CD4-positive, alpha-beta memory T cell (primary cell): ENCODE measurements at regions of chr3 and their contacts with region 1.

Region 1: GRCh38 chr3:170357176-170357919 is at the start of gene SKIL:
- DNase-seq: peak; percentile 96 to 98 (median 97)
- H3K4me3 ChIP-seq: peak within 1 kb of the TSS; percentile 57 to 62
- H3K4me3 Mint-ChIP-seq: peak within 1 kb of the TSS; percentile 90 to 99 (median 93)
- H3K27ac ChIP-seq: peak within 1 kb of the TSS; percentile 88
- H3K27ac Mint-ChIP-seq: peak within 1 kb of the TSS; percentile 95 to 99 (median 98)
- H3K4me1 ChIP-seq: peaks cover 32% of the 10 kb centered on the region
- H3K4me1 Mint-ChIP-seq: peaks cover 31 to 72% (median 43%) of the 10 kb centered on the region in 4 donors
- H3K27me3 ChIP-seq: no peaks in the 10 kb centered on the region
- H3K27me3 Mint-ChIP-seq: no peaks in the 10 kb centered on the region
- total RNA-seq, gene SKIL: 59.3 to 60.4 TPM

Region 2: GRCh38 chr3:169764452-169765274 is 592.7 kb before region 1 on chr3 and contains the start of gene TERC:
- CTCF ChIA-PET with region 1: interaction called, 8 read pairs
- POLR2A ChIA-PET with region 1: interaction called, 11 read pairs
- intact Hi-C with region 1: loop called (anchors 2 kb)
- DNase-seq: peak; percentile 93 to 96 (median 95)
- H3K4me3 ChIP-seq: peak within 1 kb of the TSS; percentile 36 to 70
- H3K4me3 Mint-ChIP-seq: peak within 1 kb of the TSS; percentile 94 to 98 (median 98)
- H3K27ac ChIP-seq: peak within 1 kb of the TSS; percentile 87
- H3K27ac Mint-ChIP-seq: peak within 1 kb of the TSS; percentile 95 to 99 (median 98)
- H3K4me1 ChIP-seq: peaks cover 23% of the 10 kb centered on the region
- H3K4me1 Mint-ChIP-seq: peaks cover 15 to 43% (median 23%) of the 10 kb centered on the region in 4 donors
- H3K27me3 ChIP-seq: no peaks in the 10 kb centered on the region
- H3K27me3 Mint-ChIP-seq: no peaks in the 10 kb centered on the region
- total RNA-seq, gene TERC: 15.6 to 15.7 TPM

Region 3: GRCh38 chr3:169772897-169773828 is 584.2 kb before region 1 on chr3 and contains the start of gene MYNN:
- CTCF ChIA-PET with region 1: no interaction called
- POLR2A ChIA-PET with region 1: interaction called, 31 read pairs
- intact Hi-C with region 1: loop called (anchors 2 kb)
- DNase-seq: peak; percentile 92 to 95 (median 94)
- H3K4me3 ChIP-seq: peak within 1 kb of the TSS; percentile 83 to 94
- H3K4me3 Mint-ChIP-seq: peak within 1 kb of the TSS; percentile 92 to 99 (median 98)
- H3K27ac ChIP-seq: peak within 1 kb of the TSS; percentile 99
- H3K27ac Mint-ChIP-seq: peak within 1 kb of the TSS; percentile 98 to 100 (median 99)
- H3K4me1 ChIP-seq: peaks cover 36% of the 10 kb centered on the region
- H3K4me1 Mint-ChIP-seq: peaks cover 27 to 70% (median 43%) of the 10 kb centered on the region in 4 donors
- H3K27me3 ChIP-seq: no peaks in the 10 kb centered on the region
- H3K27me3 Mint-ChIP-seq: peaks cover 0 to 11% of the 10 kb centered on the region in 2 donors
- total RNA-seq, gene MYNN: 21.1 to 23.0 TPM

Region 4: GRCh38 chr3:170221924-170222646 is 135.3 kb before region 1 on chr3 and contains the start of gene PRKCI:
- CTCF ChIA-PET with region 1: interaction called, 3 read pairs
- POLR2A ChIA-PET with region 1: interaction called, 28 read pairs
- intact Hi-C with region 1: loop called (anchors 1 kb)
- DNase-seq: peak; percentile 86 to 89 (median 88)
- H3K4me3 ChIP-seq: peak within 1 kb of the TSS; percentile 91 to 97
- H3K4me3 Mint-ChIP-seq: peak within 1 kb of the TSS; percentile 91 to 99 (median 94)
- H3K27ac ChIP-seq: peak within 1 kb of the TSS; percentile 72
- H3K27ac Mint-ChIP-seq: peak within 1 kb of the TSS; percentile 92 to 99 (median 95)
- H3K4me1 ChIP-seq: peaks cover 25% of the 10 kb centered on the region
- H3K4me1 Mint-ChIP-seq: peaks cover 24 to 39% (median 29%) of the 10 kb centered on the region in 4 donors
- H3K27me3 ChIP-seq: no peaks in the 10 kb centered on the region
- H3K27me3 Mint-ChIP-seq: no peaks in the 10 kb centered on the region
- total RNA-seq, gene PRKCI: 18.0 to 27.7 TPM

Region 5: GRCh38 chr3:170277833-170278580 is 79.3 kb before region 1 on chr3:
- CTCF ChIA-PET with region 1: no interaction called
- POLR2A ChIA-PET with region 1: interaction called, 11 read pairs
- intact Hi-C with region 1: no loop called
- DNase-seq: peak in 4 of 5 donors; percentile 22 to 41 (median 24)
- H3K4me3 ChIP-seq: peak overlapping the region; percentile 13 to 61
- H3K4me3 Mint-ChIP-seq: peak overlapping the region; percentile 75 to 92 (median 89)
- H3K27ac ChIP-seq: peak overlapping the region; percentile 3
- H3K27ac Mint-ChIP-seq: peak overlapping the region; percentile 61 to 96 (median 92)
- H3K4me1 ChIP-seq: peaks cover 22% of the 10 kb centered on the region
- H3K4me1 Mint-ChIP-seq: peaks cover 17 to 28% (median 22%) of the 10 kb centered on the region in 4 donors
- H3K27me3 ChIP-seq: no peaks in the 10 kb centered on the region
- H3K27me3 Mint-ChIP-seq: no peaks in the 10 kb centered on the region

Region 6: DNA sequence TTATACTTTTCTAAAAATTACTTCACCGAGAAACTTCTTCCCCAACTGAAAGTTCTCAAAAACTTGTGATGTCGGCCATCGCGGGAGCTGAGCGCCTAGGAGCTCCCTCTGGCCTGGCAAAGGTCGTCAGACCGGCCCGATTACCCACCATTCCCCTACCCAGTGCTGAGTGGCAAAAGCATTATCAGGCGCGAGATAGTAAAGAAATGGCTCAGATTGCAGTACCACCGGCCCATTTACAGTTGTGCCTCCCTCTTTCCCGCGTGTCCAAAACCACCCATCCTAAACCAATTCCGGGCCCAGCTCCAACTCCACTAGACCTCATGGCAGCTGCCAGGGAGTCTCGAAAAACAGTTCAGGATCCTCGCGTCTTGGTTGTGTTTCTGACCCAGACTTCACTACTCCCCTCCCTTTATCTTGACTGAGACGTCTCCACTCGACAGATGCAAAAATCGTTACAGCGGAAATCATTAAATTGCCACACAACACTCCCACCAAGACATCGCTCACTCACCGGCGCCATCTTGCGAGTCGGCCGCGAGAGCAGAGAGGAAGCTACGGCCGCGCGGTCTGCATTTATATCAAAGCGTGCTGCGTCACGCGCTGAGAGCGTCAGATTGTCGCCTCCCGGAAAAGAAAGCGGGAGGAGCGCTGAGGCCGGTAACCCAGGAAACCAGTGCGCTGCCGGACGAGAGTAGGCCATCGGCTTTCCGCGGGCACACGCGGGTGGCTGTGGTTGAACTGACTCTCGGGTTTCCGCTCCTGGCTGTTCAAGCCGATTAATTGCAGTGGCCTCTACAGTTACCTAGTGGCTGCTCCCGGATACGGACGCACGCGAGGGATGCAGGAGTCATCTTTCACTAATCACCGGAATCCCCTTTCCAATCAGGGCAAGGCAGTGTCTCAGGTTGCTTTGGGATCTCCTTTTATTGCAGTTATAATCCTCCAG is 512.6 kb after region 1 on chr3 and contains the start of gene RPL22L1:
- CTCF ChIA-PET with region 1: no interaction called
- POLR2A ChIA-PET with region 1: interaction called, 10 read pairs
- intact Hi-C with region 1: loop called (anchors 5 kb)
- DNase-seq: peak; percentile 92 to 94 (median 94)
- H3K4me3 ChIP-seq: peak within 1 kb of the TSS; percentile 76 to 92
- H3K4me3 Mint-ChIP-seq: peak within 1 kb of the TSS; percentile 91 to 98 (median 96)
- H3K27ac ChIP-seq: peak within 1 kb of the TSS; percentile 82
- H3K27ac Mint-ChIP-seq: peak within 1 kb of the TSS; percentile 92 to 99 (median 98)
- H3K4me1 ChIP-seq: peaks cover 34% of the 10 kb centered on the region
- H3K4me1 Mint-ChIP-seq: peaks cover 12 to 36% (median 24%) of the 10 kb centered on the region in 4 donors
- H3K27me3 ChIP-seq: no peaks in the 10 kb centered on the region
- H3K27me3 Mint-ChIP-seq: no peaks in the 10 kb centered on the region
- total RNA-seq, gene RPL22L1: 31.9 to 32.3 TPM